Gastrocnemius medialis (tissue), 4 donors: ENCODE measurements at regions of chr5 and their contacts with region 1.

Region 1: GRCh38 chr5:81759632-81760005 is 8.7 kb upstream of the SSBP2 start:
- DNase-seq: no peak
- ATAC-seq: no peak
- H3K4me3 ChIP-seq: no peak overlapping the region
- H3K27ac ChIP-seq: no peak overlapping the region
- H3K4me1 ChIP-seq: peaks cover 13 to 21% of the 10 kb centered on the region in 2 donors
- H3K27me3 ChIP-seq: no peaks in the 10 kb centered on the region
- CTCF ChIP-seq: no peak
- POLR2A ChIP-seq: peak in 1 of 2 donors; percentile 7

Region 2: DNA sequence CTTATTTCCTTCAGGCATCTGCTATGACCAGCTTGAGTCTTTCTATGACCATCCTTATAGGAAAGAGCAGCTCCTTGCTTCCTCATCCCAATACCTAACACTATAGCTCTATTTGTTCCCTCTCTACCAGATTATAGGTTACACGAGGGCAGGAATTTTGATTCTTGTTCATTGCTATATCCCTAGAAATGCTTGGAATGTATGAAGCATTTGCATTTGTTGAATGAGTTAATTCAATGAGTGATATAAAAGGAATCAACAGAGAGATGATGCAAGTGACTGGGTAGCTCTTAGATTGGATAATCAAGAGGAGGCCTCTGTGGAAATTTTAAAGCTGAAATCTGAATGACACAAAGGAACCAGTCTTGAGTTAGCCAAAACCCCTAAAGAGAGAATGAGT is 444.3 kb before region 1 on chr5:
- in situ Hi-C with region 1: no loop called
- intact Hi-C with region 1: no loop called
- DNase-seq: no peak
- ATAC-seq: no peak
- H3K4me3 ChIP-seq: no peak overlapping the region
- H3K27ac ChIP-seq: no peak overlapping the region
- H3K4me1 ChIP-seq: no peaks in the 10 kb centered on the region
- H3K27me3 ChIP-seq: no peaks in the 10 kb centered on the region
- CTCF ChIP-seq: no peak
- POLR2A ChIP-seq: no peak

Region 3: GRCh38 chr5:81779125-81779915 is 19.7 kb after region 1 on chr5:
- in situ Hi-C with region 1: no loop called
- intact Hi-C with region 1: loop called (anchors 2 kb)
- DNase-seq: peak; percentile 24 to 65
- ATAC-seq: peak; percentile 61 to 83
- H3K4me3 ChIP-seq: peak overlapping the region; percentile 30 to 39 (median 33)
- H3K27ac ChIP-seq: peak overlapping the region; percentile 63 to 80 (median 70)
- H3K4me1 ChIP-seq: peaks cover 31 to 35% of the 10 kb centered on the region in 2 donors
- H3K27me3 ChIP-seq: no peaks in the 10 kb centered on the region
- CTCF ChIP-seq: no peak
- POLR2A ChIP-seq: no peak